ENCODE measurements at regions of chr17 and their contacts with region 1.

Region 1: DNA sequence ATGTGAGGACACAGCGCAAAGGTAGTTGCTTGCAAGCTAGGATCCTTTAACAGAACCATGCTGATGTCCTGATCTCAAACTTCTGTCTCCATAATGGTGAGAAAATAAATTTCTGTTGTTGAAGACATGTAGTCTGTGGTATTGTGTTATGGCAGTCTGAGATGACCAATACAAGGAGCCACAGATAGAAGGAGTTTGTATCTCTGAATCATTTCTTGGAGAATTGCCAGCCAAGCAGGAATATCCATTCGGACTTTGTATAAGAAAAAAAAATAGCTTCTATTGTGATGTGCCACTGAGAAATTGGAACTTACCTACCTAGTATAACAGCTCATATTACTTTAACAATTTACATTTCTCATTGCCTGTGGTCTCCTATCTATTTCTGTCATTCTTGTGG is 447.6 kb upstream of the CA10 start:
- DNase-seq: no peak
- ATAC-seq: peak in 2 of 8 donors; percentile 31 to 37
- H3K4me3 ChIP-seq: no peak overlapping the region
- H3K27ac ChIP-seq: no peak overlapping the region
- H3K4me1 ChIP-seq: no peaks in the 10 kb centered on the region
- H3K27me3 ChIP-seq: no peaks in the 10 kb centered on the region
- CTCF ChIP-seq: no peak

Region 2: GRCh38 chr17:52751051-52751450 is 145.0 kb after region 1 on chr17:
- intact Hi-C with region 1: loop called in 1 of 10 experiments (anchors 10 kb)
- DNase-seq: peak in 1 of 2 donors; percentile 5
- ATAC-seq: no peak
- H3K4me3 ChIP-seq: no peak overlapping the region
- H3K27ac ChIP-seq: no peak overlapping the region
- H3K4me1 ChIP-seq: no peaks in the 10 kb centered on the region
- H3K27me3 ChIP-seq: no peaks in the 10 kb centered on the region
- CTCF ChIP-seq: no peak